ENCODE measurements at regions of chr10 and their contacts with region 1.

Region 1: GRCh38 chr10:22988581-22989360 is 60.9 kb downstream of the ARMC3 start:
- DNase-seq: peak in 8 of 10 donors; percentile 22 to 89 (median 64)

Region 2: GRCh38 chr10:21989453-21990154 is 999.2 kb before region 1 on chr10:
- intact Hi-C with region 1: loop called (anchors 2 kb)
- DNase-seq: peak in 8 of 10 donors; percentile 37 to 92 (median 67)

Region 3: DNA sequence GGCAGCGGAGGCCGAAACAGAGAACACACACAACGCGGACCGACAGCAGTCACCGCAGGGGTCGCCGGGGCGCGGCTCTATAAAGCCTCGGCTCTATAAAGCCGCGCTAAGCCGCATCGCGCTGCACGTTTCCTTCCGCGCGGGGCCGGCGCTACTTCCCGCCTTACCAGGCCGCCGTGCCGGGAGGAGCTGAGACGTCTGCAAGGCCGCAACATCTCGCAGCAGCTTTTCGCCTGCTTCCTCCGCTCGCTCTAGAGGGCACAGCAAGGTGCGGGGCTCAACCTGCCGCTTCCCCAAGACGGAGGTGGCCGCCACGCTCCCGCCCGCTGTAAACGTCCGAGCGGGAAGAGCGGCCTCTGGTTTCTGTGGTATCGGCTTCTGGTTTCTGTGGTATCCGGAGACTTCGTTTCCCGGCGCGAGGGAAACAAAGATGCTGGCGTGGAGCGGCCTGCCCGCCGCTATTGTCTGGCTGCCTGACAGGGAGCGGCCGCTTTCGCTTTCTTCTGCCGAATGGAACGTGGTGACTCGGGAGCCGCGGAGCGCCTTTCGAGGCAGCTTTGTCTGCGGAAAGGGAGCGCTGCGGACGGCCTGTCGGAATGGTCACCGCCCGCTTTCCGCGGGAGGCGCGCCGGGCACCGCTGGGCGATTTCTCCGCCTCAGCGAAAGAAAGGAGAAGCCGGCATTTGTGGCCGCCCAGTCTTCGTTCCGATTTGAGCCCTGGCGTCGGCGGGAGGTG is 551.7 kb before region 1 on chr10:
- intact Hi-C with region 1: loop called (anchors 5 kb)
- DNase-seq: peak; percentile 66 to 98 (median 86)

Region 4: GRCh38 chr10:22615819-22616499 is 372.8 kb before region 1 on chr10:
- intact Hi-C with region 1: loop called (anchors 10 kb)
- DNase-seq: peak; percentile 65 to 98 (median 87)

Region 5: GRCh38 chr10:22723343-22723779 is 265.4 kb before region 1 on chr10:
- intact Hi-C with region 1: no loop called
- DNase-seq: no peak

Region 6: DNA sequence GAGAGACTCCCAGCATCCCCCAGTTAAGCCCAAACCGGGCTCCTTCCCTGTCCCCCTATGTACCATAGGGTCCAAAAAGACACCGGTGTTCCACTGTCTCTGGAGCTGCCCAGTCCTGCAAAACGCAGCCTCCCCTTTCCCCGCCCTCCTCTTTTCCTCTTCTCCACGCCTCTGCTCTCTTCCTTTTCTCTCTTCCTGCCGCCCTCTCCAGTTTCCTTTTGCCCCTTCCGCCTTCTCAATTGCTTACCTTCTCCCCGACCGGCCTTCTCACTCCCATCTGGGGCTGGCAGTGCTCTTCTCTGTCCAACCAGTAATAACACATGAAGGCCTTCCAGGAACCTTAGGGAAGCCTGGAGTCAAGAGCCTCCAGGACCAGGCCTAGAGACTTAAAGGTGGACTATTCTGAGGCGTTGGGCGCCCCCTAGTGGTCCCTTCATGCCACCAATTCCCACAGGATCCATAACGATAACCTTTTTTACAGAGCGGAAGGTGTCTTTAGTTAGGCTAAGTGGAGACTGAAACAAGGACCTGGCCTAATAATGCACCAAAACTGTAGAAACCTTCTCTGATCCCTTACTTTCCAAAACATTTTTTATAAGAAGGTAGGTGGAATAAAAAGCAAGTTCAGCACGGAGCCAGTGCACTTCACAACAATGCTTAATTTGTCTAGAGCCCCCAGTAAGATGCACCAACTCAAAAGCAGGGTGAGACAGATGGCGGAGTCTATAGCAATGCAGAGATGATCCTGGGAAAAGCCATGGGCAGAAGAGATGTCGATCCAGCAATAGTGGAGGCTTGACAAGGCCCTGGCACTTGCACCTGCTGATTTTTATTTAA is 79.4 kb after region 1 on chr10:
- intact Hi-C with region 1: loop called (anchors 5 kb)
- DNase-seq: peak; percentile 58 to 96 (median 74)